ENCODE measurements at regions of chr18 and their contacts with region 1.

Region 1: DNA sequence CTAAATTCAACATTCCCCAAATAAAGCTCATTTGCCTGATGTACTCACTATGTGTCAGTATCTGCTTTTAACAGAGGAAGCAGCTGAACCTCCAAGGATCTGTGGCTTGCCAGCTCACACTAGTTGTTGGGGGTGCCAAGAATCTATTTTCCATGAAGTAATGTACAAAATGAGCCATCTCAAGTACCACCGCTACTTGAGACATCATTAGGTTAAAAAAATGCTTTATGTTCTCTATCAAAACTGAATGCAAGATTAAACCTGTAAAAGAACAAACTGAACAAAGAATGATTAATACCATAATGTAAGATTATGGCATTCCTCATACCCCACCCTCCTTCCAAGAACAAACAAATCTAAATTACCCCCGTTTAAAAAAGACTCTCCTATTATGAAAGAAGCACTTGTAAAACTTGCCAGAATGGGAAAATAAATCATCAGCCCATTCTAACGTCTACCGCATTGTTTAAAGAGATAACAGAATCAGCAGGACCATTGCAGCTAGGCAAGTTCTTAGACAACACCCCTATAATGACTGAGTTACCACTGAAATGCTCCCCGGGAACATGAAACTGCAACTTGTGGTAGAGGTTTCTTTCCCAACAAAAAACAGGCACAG is 471.6 kb downstream of the DLGAP1 start:
- DNase-seq: peak; percentile 7 to 84
- ATAC-seq: peak; percentile 90 to 94
- H3K4me3 ChIP-seq: no peak overlapping the region
- H3K27ac ChIP-seq: peak overlapping the region; percentile 87 to 88
- H3K4me1 ChIP-seq: peaks cover 39% of the 10 kb centered on the region
- CTCF ChIP-seq: no peak
- EP300 ChIP-seq: peak; percentile 88 to 89; a peak in 4 of 5 replicates
- POLR2A ChIP-seq: no peak
- RAD21 ChIP-seq: 0 out of 5 replicates have a peak, but pooled peaks of 1 of the 2 experiments have one; percentile 24

Region 2: GRCh38 chr18:3966985-3967856 is 16.2 kb before region 1 on chr18:
- CTCF ChIA-PET with region 1: interaction called, 6 read pairs
- POLR2A ChIA-PET with region 1: interaction called, 11 read pairs
- DNase-seq: peak; percentile 39 to 89
- ATAC-seq: peak; percentile 94
- H3K4me3 ChIP-seq: no peak overlapping the region
- H3K27ac ChIP-seq: peak overlapping the region; percentile 86 to 89
- H3K4me1 ChIP-seq: peaks cover 48% of the 10 kb centered on the region
- CTCF ChIP-seq: no peak
- EP300 ChIP-seq: peak; percentile 80 to 83; a peak in 4 of 5 replicates
- POLR2A ChIP-seq: no peak
- RAD21 ChIP-seq: no peak

Region 3: GRCh38 chr18:3995476-3996102 is 12.1 kb after region 1 on chr18:
- CTCF ChIA-PET with region 1: interaction called, 29 read pairs
- POLR2A ChIA-PET with region 1: no interaction called
- DNase-seq: peak in 1 of 2 experiments; percentile 79
- ATAC-seq: peak; percentile 19 to 53; a peak in 3 of 6 replicates
- H3K4me3 ChIP-seq: no peak overlapping the region
- H3K27ac ChIP-seq: peak overlapping the region; percentile 49 to 83
- H3K4me1 ChIP-seq: peaks cover 19% of the 10 kb centered on the region
- CTCF ChIP-seq: peak; percentile 77
- EP300 ChIP-seq: no peak
- POLR2A ChIP-seq: no peak
- RAD21 ChIP-seq: peak; percentile 74 to 75

Measured in A549 (cell line).